ENCODE measurements at regions of chr17 and their contacts with region 1.

Region 1: GRCh38 chr17:63961355-63962212 is 11.1 kb downstream of the SCN4A start:
- DNase-seq: peak in 7 of 14 experiments; percentile 16 to 68 (median 36)
- ATAC-seq: peak; percentile 76
- H3K4me3 ChIP-seq: no peak overlapping the region
- H3K4me3 Mint-ChIP-seq: no peak overlapping the region
- H3K27ac ChIP-seq: no peak overlapping the region
- H3K27ac Mint-ChIP-seq: no peak overlapping the region
- H3K4me1 ChIP-seq: peaks cover 10% of the 10 kb centered on the region
- H3K4me1 Mint-ChIP-seq: peaks cover 2% of the 10 kb centered on the region
- H3K27me3 ChIP-seq: no peaks in the 10 kb centered on the region
- H3K27me3 Mint-ChIP-seq: no peaks in the 10 kb centered on the region
- CTCF ChIP-seq: no peak

Region 2: GRCh38 chr17:63978272-63979200 is 17.0 kb after region 1 on chr17:
- CTCF ChIA-PET with region 1: interaction called, 3 read pairs
- POLR2A ChIA-PET with region 1: no interaction called
- intact Hi-C with region 1: loop called in 1 of 2 experiments (anchors 2 kb)
- DNase-seq: no peak
- ATAC-seq: no peak
- H3K4me3 ChIP-seq: no peak overlapping the region
- H3K4me3 Mint-ChIP-seq: no peak overlapping the region
- H3K27ac ChIP-seq: no peak overlapping the region
- H3K27ac Mint-ChIP-seq: no peak overlapping the region
- H3K4me1 ChIP-seq: no peaks in the 10 kb centered on the region
- H3K4me1 Mint-ChIP-seq: no peaks in the 10 kb centered on the region
- H3K27me3 ChIP-seq: peaks cover 0 to 3% of the 10 kb centered on the region in 2 experiments
- H3K27me3 Mint-ChIP-seq: no peaks in the 10 kb centered on the region
- CTCF ChIP-seq: no peak

Region 3: GRCh38 chr17:63988741-63989621 is 27.4 kb after region 1 on chr17:
- CTCF ChIA-PET with region 1: no interaction called
- POLR2A ChIA-PET with region 1: no interaction called
- intact Hi-C with region 1: no loop called
- DNase-seq: no peak
- ATAC-seq: no peak
- H3K4me3 ChIP-seq: no peak overlapping the region
- H3K4me3 Mint-ChIP-seq: no peak overlapping the region
- H3K27ac ChIP-seq: no peak overlapping the region
- H3K27ac Mint-ChIP-seq: no peak overlapping the region
- H3K4me1 ChIP-seq: peaks cover 60% of the 10 kb centered on the region
- H3K4me1 Mint-ChIP-seq: peaks cover 61% of the 10 kb centered on the region
- H3K27me3 ChIP-seq: no peaks in the 10 kb centered on the region
- H3K27me3 Mint-ChIP-seq: no peaks in the 10 kb centered on the region
- CTCF ChIP-seq: no peak

Measured in CD4-positive, alpha-beta T cell (primary cell).